A673 (cell line): ENCODE measurements at regions of chr1 and their contacts with region 1.

Region 1: DNA sequence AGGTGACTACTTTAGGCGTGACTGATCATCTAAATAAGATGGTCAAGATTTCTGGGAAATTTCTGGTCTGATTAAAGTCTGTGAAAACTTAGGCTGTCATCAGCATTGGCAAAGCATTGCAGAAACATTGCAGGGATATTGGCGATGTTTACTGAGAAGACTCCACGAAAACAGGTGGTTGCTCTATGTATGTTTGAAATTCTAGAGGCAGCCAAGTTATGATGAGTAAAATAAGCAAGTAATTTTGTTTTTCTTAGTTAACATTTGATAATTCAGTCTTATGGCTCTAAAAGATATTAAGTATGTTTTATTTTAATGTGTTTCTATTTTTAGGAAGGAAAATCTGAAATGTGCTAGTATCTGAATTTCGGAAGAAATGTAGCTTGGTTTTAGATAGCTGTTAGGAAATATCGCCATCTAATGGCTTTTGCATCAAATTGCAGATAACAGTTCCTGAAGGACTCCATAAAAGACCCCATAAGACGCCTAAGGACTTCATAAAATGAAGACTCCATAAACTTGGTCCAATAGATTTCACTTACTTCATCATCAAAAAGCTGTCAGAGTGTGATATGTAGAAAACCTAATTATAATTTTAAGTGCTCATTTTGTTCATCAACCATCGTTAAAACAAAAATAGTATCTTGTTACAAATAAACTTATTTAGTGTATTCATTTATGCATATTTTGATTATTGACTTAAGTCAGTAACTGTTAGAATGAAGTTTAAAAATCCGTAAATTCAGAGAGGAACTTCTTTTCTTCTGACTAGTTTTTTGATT is 344.6 kb downstream of the RYR2 start:
- DNase-seq: peak; percentile 35
- H3K4me3 ChIP-seq: no peak overlapping the region
- H3K27ac ChIP-seq: no peak overlapping the region
- H3K4me1 ChIP-seq: no peaks in the 10 kb centered on the region
- H3K27me3 ChIP-seq: no peaks in the 10 kb centered on the region
- CTCF ChIP-seq: peak; percentile 64

Region 2: GRCh38 chr1:236103646-236104218 is 1282.8 kb before region 1 on chr1:
- CTCF ChIA-PET with region 1: no interaction called
- POLR2A ChIA-PET with region 1: no interaction called
- intact Hi-C with region 1: loop called (anchors 10 kb)
- DNase-seq: peak; percentile 56
- H3K4me3 ChIP-seq: no peak overlapping the region
- H3K27ac ChIP-seq: no peak overlapping the region
- H3K4me1 ChIP-seq: no peaks in the 10 kb centered on the region
- H3K27me3 ChIP-seq: no peaks in the 10 kb centered on the region
- CTCF ChIP-seq: peak; percentile 64

Region 3: DNA sequence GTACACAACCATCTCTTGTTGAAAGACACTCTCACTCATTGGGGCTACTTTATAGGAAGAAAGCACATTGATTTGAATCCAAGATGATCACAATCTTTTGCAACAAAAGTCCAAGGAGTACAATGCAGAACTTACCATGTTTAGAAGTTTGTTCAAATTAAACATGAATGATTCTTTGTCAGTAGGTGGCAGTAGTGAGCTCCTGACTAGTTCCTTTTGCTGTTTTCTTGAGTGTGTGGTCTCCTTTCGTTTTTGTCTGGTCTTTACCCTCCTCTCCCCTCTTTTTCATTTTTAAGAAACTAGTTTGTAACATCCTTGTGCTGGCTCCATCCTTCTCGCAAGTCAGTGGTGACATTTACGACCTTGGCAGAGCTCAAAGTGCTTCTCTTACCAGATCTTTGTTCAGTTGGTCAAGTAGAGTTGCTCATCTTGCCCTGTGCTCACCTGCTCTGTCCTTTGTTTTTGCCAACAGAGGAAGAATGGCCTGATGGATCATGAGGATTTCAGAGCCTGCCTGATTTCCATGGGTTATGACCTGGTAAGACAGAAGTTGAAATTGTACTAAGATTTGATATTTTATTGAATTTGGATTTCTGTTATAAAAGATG is 627.2 kb before region 1 on chr1:
- CTCF ChIA-PET with region 1: interaction called, 3 read pairs
- POLR2A ChIA-PET with region 1: no interaction called
- intact Hi-C with region 1: loop called (anchors 2 kb)
- DNase-seq: peak; percentile 61
- H3K4me3 ChIP-seq: no peak overlapping the region
- H3K27ac ChIP-seq: no peak overlapping the region
- H3K4me1 ChIP-seq: no peaks in the 10 kb centered on the region
- H3K27me3 ChIP-seq: no peaks in the 10 kb centered on the region
- CTCF ChIP-seq: peak; percentile 62

Region 4: DNA sequence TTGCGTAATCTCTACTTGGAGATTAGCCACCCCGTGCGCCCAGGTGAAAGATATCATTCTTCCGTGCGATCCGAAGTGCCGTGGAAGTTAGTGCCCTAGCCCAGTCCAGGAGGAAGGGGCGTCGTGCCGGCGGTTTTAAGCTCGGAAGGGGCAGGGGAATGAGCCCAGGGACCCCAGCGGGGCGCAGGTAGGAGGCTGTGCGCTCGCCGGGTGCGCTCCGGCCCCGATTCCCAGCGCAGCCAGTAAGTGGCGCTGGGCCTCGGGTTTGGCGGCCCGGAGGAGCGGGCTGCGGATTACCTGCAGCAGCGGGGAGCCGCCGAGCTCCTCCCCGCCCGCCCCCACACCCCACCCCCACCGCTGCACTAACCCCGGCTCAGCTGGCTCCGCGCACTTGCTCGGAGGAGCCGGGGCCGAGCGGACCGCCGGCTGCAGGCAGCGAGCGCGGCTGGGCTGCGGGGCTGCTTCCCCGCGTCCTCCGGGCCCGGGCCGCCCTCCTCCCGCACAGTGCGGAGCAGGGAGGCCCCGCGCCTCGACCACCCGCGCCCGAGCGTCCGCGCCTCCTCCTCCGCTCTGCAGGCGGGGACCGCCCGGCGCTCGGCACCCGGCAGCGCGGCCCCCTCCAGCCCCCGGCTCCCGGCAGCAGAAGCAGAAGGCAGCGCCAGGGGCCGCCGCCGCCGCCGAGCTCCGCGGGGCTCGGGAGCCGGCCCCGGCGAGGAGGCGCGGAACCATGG is 344.6 kb before region 1 on chr1 and contains the start of gene RYR2:
- CTCF ChIA-PET with region 1: interaction called, 3 read pairs
- POLR2A ChIA-PET with region 1: no interaction called
- intact Hi-C with region 1: loop called (anchors 10 kb)
- DNase-seq: peak; percentile 64
- H3K4me3 ChIP-seq: peak within 1 kb of the TSS; percentile 51
- H3K27ac ChIP-seq: no peak within 1 kb of the TSS
- H3K4me1 ChIP-seq: no peaks in the 10 kb centered on the region
- H3K27me3 ChIP-seq: peaks cover 4% of the 10 kb centered on the region
- CTCF ChIP-seq: peak; percentile 51
- total RNA-seq, gene RYR2: 2.0 and 2.8 TPM in 2 replicates

Region 5: DNA sequence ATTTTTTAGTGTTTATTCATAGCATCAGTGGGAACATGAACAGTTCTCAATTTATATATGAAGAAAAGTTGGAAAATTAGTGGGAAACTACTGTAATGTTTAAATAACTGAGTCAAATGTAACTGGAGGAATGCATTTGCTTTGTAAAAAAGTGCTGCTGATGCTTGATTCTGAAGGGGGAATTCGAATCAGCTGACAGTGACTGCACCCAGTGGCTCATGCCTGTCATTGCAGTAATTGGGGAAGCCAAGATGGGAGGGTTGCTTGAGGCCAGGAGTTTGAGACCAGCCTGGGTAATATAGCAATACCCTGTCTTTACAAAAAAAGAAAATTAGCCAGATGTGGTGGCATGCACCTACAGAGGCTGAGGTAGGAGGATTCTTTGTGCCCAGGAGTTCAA is 105.8 kb after region 1 on chr1:
- CTCF ChIA-PET with region 1: no interaction called
- POLR2A ChIA-PET with region 1: no interaction called
- intact Hi-C with region 1: loop called (anchors 1 kb)
- DNase-seq: peak; percentile 60
- H3K4me3 ChIP-seq: no peak overlapping the region
- H3K27ac ChIP-seq: peak overlapping the region; percentile 30
- H3K4me1 ChIP-seq: no peaks in the 10 kb centered on the region
- H3K27me3 ChIP-seq: no peaks in the 10 kb centered on the region
- CTCF ChIP-seq: peak; percentile 34